ENCODE measurements at regions of chr16 and their contacts with region 1.

Region 1: DNA sequence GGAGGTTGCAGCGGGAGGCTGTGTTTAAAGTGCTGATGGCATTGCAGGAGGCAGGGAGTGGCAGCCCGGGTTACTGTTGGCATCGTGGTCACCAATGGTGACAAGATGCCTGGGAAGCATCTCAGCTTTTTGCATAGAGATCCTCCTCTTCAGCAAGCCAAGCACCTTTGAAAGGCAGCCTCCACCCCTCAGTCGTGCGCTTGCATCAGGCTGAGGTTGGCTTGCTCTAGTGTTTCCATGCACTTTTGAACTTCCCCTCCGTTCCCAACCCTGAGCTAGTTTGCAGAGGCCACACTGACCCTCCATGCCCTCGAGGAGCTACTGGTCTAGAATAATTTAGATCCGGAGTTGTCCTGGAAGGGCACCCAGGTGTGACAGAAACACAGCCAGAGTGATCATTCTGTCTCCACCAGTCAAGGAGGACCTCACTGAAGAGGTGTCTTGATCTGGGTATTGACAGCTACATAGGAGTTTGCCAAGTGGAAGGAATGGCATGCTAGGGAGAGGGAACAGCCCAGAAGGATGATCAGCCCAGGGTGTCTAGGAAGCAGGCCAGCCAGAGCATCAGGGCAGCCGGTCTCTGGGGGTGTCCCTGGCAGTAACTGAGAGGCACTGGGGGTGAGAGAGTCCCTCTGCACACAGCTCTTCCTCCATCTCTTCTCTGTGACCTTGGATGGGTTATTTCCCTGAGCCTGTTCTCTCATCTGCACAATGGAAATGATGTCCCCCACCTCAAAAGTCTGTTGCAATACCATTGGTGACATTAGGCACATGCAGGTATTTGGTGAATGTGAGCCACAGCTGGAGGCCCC is 7.7 kb downstream of the BEAN1 start:
- DNase-seq: peak; percentile 92
- ATAC-seq: peak; percentile 80
- H3K4me3 ChIP-seq: peak overlapping the region in 2 of 3 experiments; percentile 0 to 47; a peak in 2 of 6 replicates
- H3K27ac ChIP-seq: peak overlapping the region; percentile 85
- H3K4me1 ChIP-seq: peaks cover 53% of the 10 kb centered on the region
- H3K27me3 ChIP-seq: no peaks in the 10 kb centered on the region
- CTCF ChIP-seq: peak; percentile 17; the same call in 1 of the 2 replicates
- EP300 ChIP-seq: peak; percentile 40 to 62; a peak in 3 of 4 replicates
- POLR2A ChIP-seq: 0 out of 4 replicates have a peak, but pooled peaks of 1 of the 2 experiments have one; percentile 40
- RAD21 ChIP-seq: no peak

Region 2: GRCh38 chr16:66457888-66458287 is 23.1 kb after region 1 on chr16:
- CTCF ChIA-PET with region 1: no interaction called
- POLR2A ChIA-PET with region 1: interaction called, 10 read pairs
- in situ Hi-C with region 1: no loop called
- intact Hi-C with region 1: no loop called
- DNase-seq: no peak
- ATAC-seq: no peak
- H3K4me3 ChIP-seq: no peak overlapping the region
- H3K27ac ChIP-seq: no peak overlapping the region
- H3K4me1 ChIP-seq: peaks cover 18% of the 10 kb centered on the region
- H3K27me3 ChIP-seq: peaks cover 0 to 12% of the 10 kb centered on the region in 2 experiments; a peak in 2 of 5 replicates
- CTCF ChIP-seq: no peak
- EP300 ChIP-seq: no peak
- POLR2A ChIP-seq: no peak
- RAD21 ChIP-seq: no peak

Region 3: GRCh38 chr16:66899945-66900710 is 465.3 kb after region 1 on chr16:
- CTCF ChIA-PET with region 1: no interaction called
- POLR2A ChIA-PET with region 1: no interaction called
- in situ Hi-C with region 1: no loop called
- intact Hi-C with region 1: no loop called
- DNase-seq: peak; percentile 72
- ATAC-seq: peak; percentile 3; the same call in 2 of the 3 replicates
- H3K4me3 ChIP-seq: peak overlapping the region; percentile 20 to 58 (median 24); a peak in 5 of 6 replicates
- H3K27ac ChIP-seq: no peak overlapping the region
- H3K4me1 ChIP-seq: peaks cover 90% of the 10 kb centered on the region
- H3K27me3 ChIP-seq: peaks cover 0 to 2% of the 10 kb centered on the region in 2 experiments; a peak in 1 of 5 replicates
- CTCF ChIP-seq: no peak
- EP300 ChIP-seq: peak in 1 of 2 experiments; percentile 32; a peak in 1 of 4 replicates
- POLR2A ChIP-seq: no peak
- RAD21 ChIP-seq: no peak